ENCODE measurements at regions of chr15 and their contacts with region 1.

Region 1: DNA sequence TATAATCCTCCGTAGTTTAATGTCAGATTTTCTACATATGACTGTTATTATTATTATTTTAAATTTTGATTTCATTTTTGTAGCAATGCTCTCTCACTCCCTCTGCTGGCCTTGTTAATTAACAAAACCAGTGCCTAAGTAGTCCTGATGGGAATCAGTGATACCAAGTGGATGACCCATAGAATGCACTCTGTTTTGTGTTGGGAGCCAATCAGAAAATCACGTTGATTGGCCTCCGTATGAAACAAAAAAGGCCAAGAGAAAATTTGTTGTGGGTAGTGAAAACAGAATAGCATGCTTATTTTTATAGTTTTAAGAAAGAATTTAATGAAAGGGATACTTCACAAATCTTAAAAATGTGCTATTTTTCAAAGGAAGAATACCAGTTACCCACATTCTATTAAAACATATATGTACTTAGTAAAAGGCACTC is 34.4 kb upstream of the MEIS2 start:
- DNase-seq: no peak
- ATAC-seq: peak; percentile 59

Region 2: GRCh38 chr15:35751413-35752133 is 1383.1 kb before region 1 on chr15:
- intact Hi-C with region 1: loop called in 1 of 2 experiments (anchors 10 kb)
- DNase-seq: peak; percentile 28 to 79
- ATAC-seq: peak; percentile 79

Region 3: GRCh38 chr15:36484038-36484778 is 650.5 kb before region 1 on chr15:
- intact Hi-C with region 1: loop called in 1 of 2 experiments (anchors 10 kb)
- DNase-seq: no peak
- ATAC-seq: no peak

Region 4: DNA sequence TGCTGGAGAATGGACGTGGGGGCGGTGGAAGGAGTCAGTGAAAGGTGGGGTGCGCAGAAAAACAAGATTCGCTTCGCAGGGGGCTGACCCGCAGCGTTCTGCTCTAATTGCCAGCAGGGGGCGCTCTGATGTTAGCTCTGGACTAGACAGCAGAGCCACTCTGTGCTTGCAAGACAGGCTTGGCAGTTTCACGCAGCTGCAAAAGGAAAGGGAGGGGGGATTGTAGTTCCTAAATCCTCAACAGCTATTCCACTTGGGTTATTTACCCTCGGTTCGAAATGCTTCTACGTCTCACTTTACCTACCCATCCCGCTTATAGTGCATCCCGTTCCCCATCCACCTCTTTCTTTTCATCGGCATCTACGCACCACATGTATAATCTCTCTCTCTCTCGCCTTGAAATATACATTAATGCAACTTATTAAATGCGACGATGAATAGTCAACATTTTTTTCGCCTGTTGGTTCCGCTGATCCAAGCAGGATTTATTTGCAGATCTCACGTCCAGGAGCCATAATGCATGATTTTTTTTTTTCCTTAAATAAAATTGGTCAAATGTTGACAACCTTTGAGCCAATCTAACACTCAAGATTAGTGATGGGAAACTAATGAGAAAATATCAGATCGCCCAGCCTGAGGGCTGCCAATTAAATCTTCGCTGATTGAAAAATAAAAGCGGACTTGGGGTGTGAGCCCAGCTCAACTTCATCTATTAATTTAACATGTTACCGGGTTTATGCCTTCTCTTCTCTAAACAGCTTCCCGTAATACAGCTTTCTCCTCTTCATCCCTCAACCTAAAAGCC is 250.8 kb before region 1 on chr15:
- intact Hi-C with region 1: loop called (anchors 2 to 10 kb)
- DNase-seq: peak; percentile 79 to 89
- ATAC-seq: peak; percentile 88

Measured in left colon (tissue), 2 donors.